Panc1 (cell line): ENCODE measurements at regions of chr2 and their contacts with region 1.

Region 1: DNA sequence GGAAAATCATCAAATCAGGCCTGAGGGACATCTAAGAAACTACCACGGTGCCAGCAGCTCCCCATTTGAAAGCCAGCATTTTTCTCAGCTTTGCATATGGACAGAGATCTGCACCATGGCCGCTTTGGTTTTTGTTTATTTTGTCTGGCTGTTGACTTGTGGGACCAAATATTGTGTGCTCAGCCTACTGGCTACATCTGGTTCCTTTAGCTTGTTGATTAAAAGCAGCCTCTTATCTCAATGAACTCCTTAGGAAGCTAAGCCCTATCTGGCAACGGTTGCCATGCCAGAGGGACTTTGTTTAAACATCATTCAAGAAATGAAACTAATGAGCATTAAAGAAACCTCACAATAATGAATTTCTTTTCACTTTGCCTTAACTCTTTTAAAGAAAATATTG is 32.4 kb upstream of the CCDC150 start:
- DNase-seq: no peak
- ATAC-seq: no peak
- H3K4me3 ChIP-seq: no peak overlapping the region
- H3K27ac ChIP-seq: no peak overlapping the region
- H3K4me1 ChIP-seq: peaks cover 3% of the 10 kb centered on the region; the same call in 1 of the 2 replicates
- H3K27me3 ChIP-seq: no peaks in the 10 kb centered on the region
- CTCF ChIP-seq: no peak

Region 2: GRCh38 chr2:196566961-196567666 is 40.0 kb before region 1 on chr2:
- CTCF ChIA-PET with region 1: no interaction called
- POLR2A ChIA-PET with region 1: no interaction called
- in situ Hi-C with region 1: no loop called
- intact Hi-C with region 1: no loop called
- DNase-seq: no peak
- ATAC-seq: no peak
- H3K4me3 ChIP-seq: no peak overlapping the region
- H3K27ac ChIP-seq: no peak overlapping the region
- H3K4me1 ChIP-seq: no peaks in the 10 kb centered on the region
- H3K27me3 ChIP-seq: no peaks in the 10 kb centered on the region
- CTCF ChIP-seq: no peak

Region 3: DNA sequence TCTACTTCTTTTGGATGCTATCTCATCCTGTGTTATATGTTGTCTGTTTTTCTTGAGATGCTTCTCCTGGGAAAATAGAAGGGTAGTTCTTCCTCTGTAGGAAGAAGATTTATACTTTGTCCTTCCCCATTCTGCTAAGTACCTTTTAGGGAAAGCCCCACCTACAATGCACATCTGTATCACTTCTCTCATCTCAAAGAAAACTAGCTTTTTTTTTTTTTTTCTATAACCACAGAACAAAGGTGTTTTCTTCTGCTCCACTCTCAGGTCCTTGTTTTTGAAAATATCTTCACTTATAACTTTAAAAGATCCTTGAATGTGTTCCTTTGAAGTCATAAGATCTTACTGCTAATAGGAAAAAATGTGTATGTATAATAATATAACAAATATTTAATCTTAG is 63.3 kb after region 1 on chr2:
- CTCF ChIA-PET with region 1: no interaction called
- POLR2A ChIA-PET with region 1: interaction called, 20 read pairs
- in situ Hi-C with region 1: no loop called
- intact Hi-C with region 1: no loop called
- DNase-seq: no peak
- ATAC-seq: no peak
- H3K4me3 ChIP-seq: no peak overlapping the region
- H3K27ac ChIP-seq: no peak overlapping the region
- H3K4me1 ChIP-seq: no peaks in the 10 kb centered on the region
- H3K27me3 ChIP-seq: no peaks in the 10 kb centered on the region
- CTCF ChIP-seq: no peak